ENCODE measurements at regions of chr1 and their contacts with region 1.

Region 1: GRCh38 chr1:8560611-8561544 is 243.0 kb downstream of the SLC45A1 start:
- DNase-seq: no peak
- H3K4me3 ChIP-seq: no peak overlapping the region
- CTCF ChIP-seq: peak in 1 of 3 donors; percentile 52
- POLR2A ChIP-seq: no peak

Region 2: GRCh38 chr1:6842301-6842700 is 1718.6 kb before region 1 on chr1:
- intact Hi-C with region 1: no loop called
- DNase-seq: no peak
- H3K4me3 ChIP-seq: no peak overlapping the region
- CTCF ChIP-seq: no peak
- POLR2A ChIP-seq: no peak

Region 3: GRCh38 chr1:8409106-8409505 is 151.8 kb before region 1 on chr1:
- intact Hi-C with region 1: loop called (anchors 10 kb)
- DNase-seq: no peak
- H3K4me3 ChIP-seq: no peak overlapping the region
- CTCF ChIP-seq: no peak
- POLR2A ChIP-seq: no peak

Measured in lower leg skin (tissue), 4 donors.